ENCODE measurements at regions of chr7 and their contacts with region 1.

Region 1: DNA sequence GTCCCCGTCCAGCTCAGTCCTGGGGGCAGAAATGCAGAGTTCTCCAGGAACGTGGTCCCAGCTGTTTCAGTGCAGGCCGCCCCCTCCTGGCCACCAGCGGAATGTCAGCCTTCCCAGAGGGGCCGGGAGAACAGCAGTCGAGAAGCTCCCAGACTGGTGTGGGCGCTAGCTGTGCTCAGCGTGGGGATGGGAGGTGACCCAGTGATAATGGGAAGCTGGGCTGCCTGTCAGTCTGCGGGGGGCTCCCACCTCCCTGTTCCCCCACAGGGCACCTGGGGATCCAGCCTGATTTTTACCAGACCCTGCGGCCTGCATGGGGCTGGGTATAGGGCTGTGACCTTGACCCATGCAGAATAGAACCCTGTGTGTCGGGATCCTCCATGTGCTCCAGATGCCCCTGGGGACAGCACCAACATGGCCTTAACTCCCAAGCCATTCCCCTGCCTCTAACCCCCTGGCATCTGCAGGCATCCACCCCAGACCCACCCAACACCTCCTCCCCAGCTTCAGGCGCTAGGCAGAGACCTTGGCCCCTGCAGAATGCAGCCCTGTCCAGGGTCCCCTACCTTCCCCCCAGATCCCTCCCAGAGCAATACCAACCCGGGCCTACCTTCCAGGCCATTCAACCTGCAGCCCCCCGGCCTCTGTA is 946 bp upstream of the ELN start:
- DNase-seq: no peak
- H3K4me3 ChIP-seq: no peak overlapping the region
- H3K27me3 ChIP-seq: no peaks in the 10 kb centered on the region
- CTCF ChIP-seq: peak; percentile 96

Region 2: DNA sequence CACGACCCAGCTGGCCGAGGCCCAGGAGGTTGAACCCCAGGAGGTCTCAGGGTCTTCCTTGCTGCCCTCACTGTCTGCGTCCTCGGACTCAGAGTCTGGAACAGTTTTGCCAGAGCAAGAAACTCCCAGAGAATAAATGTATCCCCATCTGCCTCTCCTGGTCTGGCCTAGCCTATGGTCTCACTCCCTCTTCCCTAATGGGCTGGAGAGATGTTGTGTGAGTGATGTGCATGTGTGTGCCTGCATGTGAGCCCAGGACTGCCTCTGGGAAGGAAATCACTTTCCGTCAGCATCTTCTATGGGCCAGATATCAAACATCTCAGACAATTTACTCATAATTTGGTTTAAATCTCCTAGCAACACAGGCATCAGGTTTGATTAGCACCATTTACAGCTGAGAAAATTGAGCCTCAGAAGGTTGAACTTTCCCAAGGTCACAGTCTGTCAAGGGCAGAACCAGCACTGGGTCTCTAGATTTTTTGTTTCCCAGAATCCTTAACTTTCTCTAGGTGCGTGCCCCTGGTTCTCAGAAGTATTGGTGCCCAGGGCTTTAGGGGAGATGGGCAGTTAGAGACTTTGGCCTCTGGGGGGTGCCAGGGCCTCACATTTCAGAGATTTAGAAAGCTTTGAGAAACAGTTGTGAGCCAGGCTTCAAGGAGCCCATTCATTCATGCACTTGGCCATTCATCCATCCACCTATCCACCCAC is 161.1 kb before region 1 on chr7:
- CTCF ChIA-PET with region 1: interaction called, 35 read pairs
- POLR2A ChIA-PET with region 1: no interaction called
- DNase-seq: no peak
- H3K4me3 ChIP-seq: no peak overlapping the region
- H3K27me3 ChIP-seq: no peaks in the 10 kb centered on the region
- CTCF ChIP-seq: peak; percentile 76

Region 3: GRCh38 chr7:73879977-73880681 is 146.9 kb before region 1 on chr7:
- CTCF ChIA-PET with region 1: interaction called, 22 read pairs
- POLR2A ChIA-PET with region 1: no interaction called
- DNase-seq: peak; percentile 76
- H3K4me3 ChIP-seq: no peak overlapping the region
- H3K27me3 ChIP-seq: no peaks in the 10 kb centered on the region
- CTCF ChIP-seq: no peak

Region 4: GRCh38 chr7:73999615-74000420 is 27.2 kb before region 1 on chr7:
- CTCF ChIA-PET with region 1: interaction called, 34 read pairs
- POLR2A ChIA-PET with region 1: no interaction called
- DNase-seq: peak; percentile 94
- H3K4me3 ChIP-seq: no peak overlapping the region
- H3K27me3 ChIP-seq: no peaks in the 10 kb centered on the region
- CTCF ChIP-seq: no peak

Region 5: GRCh38 chr7:74039346-74039745 is 12.3 kb after region 1 on chr7:
- CTCF ChIA-PET with region 1: interaction called, 31 read pairs
- POLR2A ChIA-PET with region 1: interaction called, 3 read pairs
- DNase-seq: no peak
- H3K4me3 ChIP-seq: no peak overlapping the region
- H3K27me3 ChIP-seq: no peaks in the 10 kb centered on the region
- CTCF ChIP-seq: no peak

Region 6: DNA sequence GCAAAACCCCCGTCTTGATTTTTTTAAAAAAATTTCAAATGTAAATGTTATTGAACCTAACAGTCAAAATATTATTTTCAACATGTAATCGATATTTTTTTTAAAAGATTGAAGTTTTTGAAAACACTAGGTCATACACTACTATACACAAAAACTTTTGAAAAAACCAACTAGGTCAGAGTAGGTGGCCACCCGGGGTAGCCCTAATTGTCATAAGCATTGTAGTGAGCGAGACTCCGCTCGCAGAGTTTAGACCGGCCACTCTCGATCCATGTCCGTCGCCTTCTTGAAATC is 226.8 kb after region 1 on chr7:
- CTCF ChIA-PET with region 1: no interaction called
- POLR2A ChIA-PET with region 1: no interaction called
- DNase-seq: no peak
- H3K4me3 ChIP-seq: peak overlapping the region; percentile 85
- H3K27me3 ChIP-seq: no peaks in the 10 kb centered on the region
- CTCF ChIP-seq: no peak

Measured in BJ (cell line).